GM10248 (cell line): ENCODE measurements at regions of chr15 and their contacts with region 1.

Region 1: DNA sequence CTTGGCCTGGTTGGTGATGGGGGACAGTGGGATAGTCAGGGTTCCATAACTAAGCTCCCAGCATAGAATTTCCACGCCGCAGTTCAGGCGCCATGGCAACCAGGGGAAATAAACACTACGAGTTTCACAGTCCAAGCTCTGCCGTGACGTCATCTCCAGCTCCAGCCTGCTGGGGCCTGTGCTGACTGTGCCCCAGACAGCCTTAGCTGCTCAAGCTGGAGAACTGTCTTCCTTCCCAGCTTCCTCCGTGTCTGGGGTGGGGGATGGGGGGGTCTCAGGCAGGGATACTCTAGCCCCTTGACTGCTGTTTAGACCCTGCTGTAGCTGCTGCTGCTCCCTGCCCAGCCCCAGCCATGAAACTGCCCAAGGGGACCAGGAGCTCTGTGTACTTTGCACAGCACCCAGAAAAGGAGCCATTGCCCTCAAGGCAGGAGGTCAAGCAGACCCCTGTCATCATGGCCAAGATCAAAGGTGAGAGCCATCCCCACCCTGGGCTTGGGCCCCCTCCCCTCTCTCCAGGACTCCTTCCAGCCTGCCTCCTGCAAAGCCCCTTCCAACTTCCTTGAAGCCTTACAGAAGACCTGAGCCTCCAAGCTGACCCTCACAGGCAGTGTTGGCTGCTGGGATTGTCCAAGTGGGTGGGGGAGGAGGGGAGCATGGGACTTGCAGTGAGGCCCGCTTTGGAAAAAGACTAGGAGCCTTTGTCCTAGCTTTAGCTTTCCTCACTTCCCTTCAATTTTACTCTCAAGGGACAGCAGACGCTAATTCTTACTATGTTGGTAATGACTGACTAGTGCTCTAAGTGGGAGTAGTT is 11.4 kb upstream of the CSPG4 start:
- DNase-seq: peak; percentile 89
- CTCF ChIP-seq: no peak

Region 2: DNA sequence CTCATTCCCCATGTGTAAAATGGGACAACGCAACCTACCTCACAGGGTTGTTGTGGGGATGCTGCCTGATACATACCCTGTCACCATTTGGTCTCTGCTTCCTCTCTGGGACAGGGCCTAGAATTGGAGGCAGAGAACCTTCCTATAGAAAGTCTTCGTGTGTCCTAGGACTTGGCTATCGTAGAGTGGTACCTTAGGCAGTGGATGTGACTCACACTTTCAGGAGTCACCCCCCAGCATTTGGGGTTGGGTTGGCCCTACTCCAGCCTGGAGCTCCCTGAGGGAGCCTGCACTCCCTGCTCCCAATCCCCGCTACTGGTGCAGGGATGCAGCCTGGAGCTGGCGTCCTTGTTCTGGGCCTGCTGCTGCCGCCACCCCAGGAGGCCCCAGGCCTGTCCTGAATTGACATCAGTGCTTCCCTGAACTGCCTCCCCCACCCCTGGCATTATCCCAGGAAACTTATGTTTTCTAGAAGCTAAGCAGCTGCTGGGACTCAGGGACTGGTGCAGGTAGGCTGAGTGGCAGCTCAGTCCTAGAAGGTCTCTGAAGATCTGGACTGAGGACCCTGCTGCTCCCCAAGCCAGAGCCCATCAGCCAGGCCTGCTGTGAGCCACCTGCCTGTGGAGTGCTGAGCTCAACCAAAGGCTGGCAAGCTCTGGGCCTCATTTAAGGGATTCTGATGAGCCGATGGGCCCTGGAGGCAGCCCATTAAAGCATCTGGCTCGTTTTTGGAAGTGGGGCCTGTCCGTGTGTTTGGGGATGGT is 512.4 kb before region 1 on chr15:
- CTCF ChIA-PET with region 1: no interaction called
- POLR2A ChIA-PET with region 1: no interaction called
- DNase-seq: no peak
- CTCF ChIP-seq: no peak

Region 3: GRCh38 chr15:75694241-75695182 is 29.5 kb before region 1 on chr15:
- CTCF ChIA-PET with region 1: interaction called, 14 read pairs
- POLR2A ChIA-PET with region 1: no interaction called
- DNase-seq: peak; percentile 54
- CTCF ChIP-seq: peak; percentile 0